Uterus (tissue), 4 donors: ENCODE measurements at regions of chr7 and their contacts with region 1.

Region 1: DNA sequence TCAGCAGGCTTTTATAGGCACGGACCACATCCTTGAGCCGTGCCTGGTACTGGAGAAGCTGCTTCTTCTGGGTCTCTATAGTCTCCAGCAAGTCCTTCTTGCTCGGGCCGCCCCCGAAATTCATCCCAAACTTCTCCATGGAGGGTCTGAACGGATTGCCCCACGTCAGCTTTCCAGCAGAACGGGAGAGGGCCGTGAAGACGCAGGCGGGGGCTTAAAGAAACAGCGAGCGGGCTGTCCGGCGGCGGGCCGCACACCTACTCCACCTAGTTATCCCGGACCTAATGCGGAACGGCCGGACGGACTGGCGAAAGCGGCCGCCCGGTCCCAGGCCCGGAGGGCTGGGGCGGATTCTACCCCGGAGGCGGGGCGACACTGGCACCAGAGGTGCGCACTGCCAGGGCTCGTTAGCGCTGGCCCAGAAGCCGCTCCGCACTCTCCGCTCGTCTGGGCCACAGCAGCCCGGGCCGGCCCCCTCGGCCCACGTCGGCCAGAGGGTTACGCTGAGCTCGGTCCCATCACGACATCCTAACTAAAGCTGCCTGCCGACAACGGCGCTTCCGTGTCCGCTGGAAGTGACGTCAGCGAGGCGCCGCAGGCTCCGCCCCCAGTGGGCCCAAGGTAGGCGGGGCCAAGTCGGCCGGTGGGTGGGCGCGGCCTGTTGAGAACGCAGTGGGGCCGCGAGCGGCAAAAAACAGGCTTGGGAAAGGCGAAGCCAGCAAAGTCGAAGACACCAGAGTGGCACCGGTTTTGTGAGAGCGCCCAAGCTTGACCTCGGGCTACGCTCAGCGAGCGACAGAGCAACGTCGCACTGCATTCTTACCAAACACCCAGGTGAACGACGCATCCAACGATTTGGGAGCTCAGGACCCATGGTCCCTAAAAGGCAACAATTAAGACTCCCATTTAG is at the start of gene GCC1:
- DNase-seq: peak; percentile 92 to 96
- H3K4me3 ChIP-seq: peak within 1 kb of the TSS; percentile 57 to 88
- H3K27ac ChIP-seq: peak within 1 kb of the TSS; percentile 83 to 89
- H3K4me1 ChIP-seq: peaks cover 4 to 11% of the 10 kb centered on the region in 2 donors
- H3K27me3 ChIP-seq: no peaks in the 10 kb centered on the region
- CTCF ChIP-seq: no peak
- POLR2A ChIP-seq: peak; percentile 89 to 90
- total RNA-seq, gene GCC1: 3.8 to 22.9 (median 10.6) TPM

Region 2: DNA sequence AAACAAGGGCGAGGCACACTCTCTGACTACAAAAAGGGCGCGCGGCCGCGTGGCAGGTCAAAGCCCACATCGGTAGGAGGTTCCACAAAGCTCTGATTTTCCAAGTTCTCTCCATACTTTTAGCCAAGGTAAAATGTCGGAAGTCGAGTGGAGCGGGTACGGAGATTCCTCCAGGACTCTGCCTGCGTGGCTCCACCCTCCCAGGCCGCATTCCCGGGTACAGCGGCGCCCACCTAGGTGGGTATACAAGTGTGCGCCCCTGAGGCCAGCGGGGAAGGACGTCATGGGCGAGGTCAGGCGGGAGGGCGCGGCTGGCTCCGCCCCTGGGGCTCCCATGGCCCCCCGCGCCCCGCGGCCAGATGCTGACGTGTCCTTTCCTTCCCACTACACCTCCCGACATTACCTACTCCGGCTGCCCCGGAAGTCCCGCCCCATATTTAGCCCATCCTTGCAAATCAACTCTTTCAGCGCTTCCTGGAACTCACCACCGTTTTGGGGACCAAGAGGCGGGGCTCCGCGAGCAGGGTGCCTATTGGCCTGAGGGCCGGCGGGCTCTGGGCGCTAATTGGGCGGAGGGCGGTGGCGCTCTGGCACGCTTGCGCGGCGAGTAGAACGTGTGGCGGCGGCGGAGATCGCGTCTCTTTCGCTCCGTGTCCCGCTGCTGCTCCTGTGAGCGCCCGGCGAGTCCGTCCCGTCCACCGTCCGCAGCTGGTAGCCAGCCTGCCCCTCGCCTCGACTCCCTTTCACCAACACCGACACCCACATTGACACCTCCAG is 66.4 kb after region 1 on chr7 and contains the start of gene SND1:
- intact Hi-C with region 1: loop called (anchors 5 kb)
- DNase-seq: peak; percentile 99 to 100
- H3K4me3 ChIP-seq: peak within 1 kb of the TSS; percentile 93 to 100
- H3K27ac ChIP-seq: peak within 1 kb of the TSS; percentile 95 to 98
- H3K4me1 ChIP-seq: no peaks in the 10 kb centered on the region
- H3K27me3 ChIP-seq: no peaks in the 10 kb centered on the region
- CTCF ChIP-seq: peak in 1 of 4 experiments; percentile 3
- POLR2A ChIP-seq: peak; percentile 57 to 84
- total RNA-seq, gene SND1: 54.8 to 192 (median 117) TPM